SK-N-SH (cell line): ENCODE measurements at regions of chr16 and their contacts with region 1.

Region 1: DNA sequence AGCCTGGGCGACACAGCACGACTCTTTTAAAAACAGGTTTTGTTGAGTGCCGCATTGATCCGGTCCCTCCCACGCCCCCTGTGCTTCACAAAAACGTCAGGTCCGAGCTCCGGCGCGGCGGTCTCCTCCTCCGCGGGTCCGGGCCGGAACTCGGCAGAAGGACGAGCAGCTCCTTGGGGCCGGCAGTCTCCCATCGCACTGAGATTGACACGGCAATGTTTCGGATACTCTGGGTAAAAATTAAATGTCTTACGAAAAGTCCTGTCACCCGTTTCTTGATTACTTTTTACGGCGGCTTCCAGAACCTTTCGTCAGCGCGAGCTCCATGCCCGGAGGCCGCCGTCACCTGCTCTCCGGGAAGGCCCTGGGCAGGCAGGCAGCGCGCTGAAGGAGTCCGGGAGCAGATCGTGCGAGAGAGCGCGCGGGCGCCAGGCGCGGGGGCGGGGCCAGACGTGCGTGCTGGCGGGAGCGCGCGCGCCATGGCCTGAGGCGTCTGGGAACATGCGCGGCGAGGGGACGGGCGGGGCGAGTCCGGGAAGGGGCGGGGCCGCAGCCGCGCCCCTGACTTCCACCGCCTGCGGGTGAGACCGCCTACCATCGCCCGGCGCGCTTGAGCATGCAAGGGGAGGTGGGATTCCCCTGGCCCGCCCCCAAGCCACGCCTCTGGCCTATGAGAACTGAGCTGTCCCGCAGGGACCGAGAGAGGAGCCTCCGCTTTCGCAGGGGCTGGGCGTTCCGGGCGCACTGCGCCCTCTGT is 11.7 kb upstream of the SRL start:
- DNase-seq: peak; percentile 99
- H3K4me3 ChIP-seq: peak overlapping the region; percentile 50 to 81
- H3K27ac ChIP-seq: peak overlapping the region; percentile 73 to 79
- H3K4me1 ChIP-seq: no peaks in the 10 kb centered on the region
- H3K27me3 ChIP-seq: no peaks in the 10 kb centered on the region
- CTCF ChIP-seq: no peak
- EP300 ChIP-seq: peak in 1 of 2 experiments; percentile 52; a peak in 2 of 4 replicates
- RAD21 ChIP-seq: peak; percentile 90

Region 2: GRCh38 chr16:3938848-3939624 is 314.5 kb before region 1 on chr16:
- CTCF ChIA-PET with region 1: interaction called, 16 read pairs
- POLR2A ChIA-PET with region 1: no interaction called
- DNase-seq: peak; percentile 95
- H3K4me3 ChIP-seq: peak overlapping the region; percentile 45 to 64
- H3K27ac ChIP-seq: no peak overlapping the region
- H3K4me1 ChIP-seq: peaks cover 0 to 2% of the 10 kb centered on the region in 2 experiments; a peak in 1 of 4 replicates
- H3K27me3 ChIP-seq: no peaks in the 10 kb centered on the region
- CTCF ChIP-seq: peak; percentile 91
- EP300 ChIP-seq: no peak
- RAD21 ChIP-seq: peak; percentile 59

Region 3: GRCh38 chr16:3988824-3989223 is 264.7 kb before region 1 on chr16:
- CTCF ChIA-PET with region 1: interaction called, 80 read pairs
- POLR2A ChIA-PET with region 1: no interaction called
- DNase-seq: no peak
- H3K4me3 ChIP-seq: no peak overlapping the region
- H3K27ac ChIP-seq: no peak overlapping the region
- H3K4me1 ChIP-seq: no peaks in the 10 kb centered on the region
- H3K27me3 ChIP-seq: no peaks in the 10 kb centered on the region
- CTCF ChIP-seq: no peak
- EP300 ChIP-seq: no peak
- RAD21 ChIP-seq: no peak

Region 4: DNA sequence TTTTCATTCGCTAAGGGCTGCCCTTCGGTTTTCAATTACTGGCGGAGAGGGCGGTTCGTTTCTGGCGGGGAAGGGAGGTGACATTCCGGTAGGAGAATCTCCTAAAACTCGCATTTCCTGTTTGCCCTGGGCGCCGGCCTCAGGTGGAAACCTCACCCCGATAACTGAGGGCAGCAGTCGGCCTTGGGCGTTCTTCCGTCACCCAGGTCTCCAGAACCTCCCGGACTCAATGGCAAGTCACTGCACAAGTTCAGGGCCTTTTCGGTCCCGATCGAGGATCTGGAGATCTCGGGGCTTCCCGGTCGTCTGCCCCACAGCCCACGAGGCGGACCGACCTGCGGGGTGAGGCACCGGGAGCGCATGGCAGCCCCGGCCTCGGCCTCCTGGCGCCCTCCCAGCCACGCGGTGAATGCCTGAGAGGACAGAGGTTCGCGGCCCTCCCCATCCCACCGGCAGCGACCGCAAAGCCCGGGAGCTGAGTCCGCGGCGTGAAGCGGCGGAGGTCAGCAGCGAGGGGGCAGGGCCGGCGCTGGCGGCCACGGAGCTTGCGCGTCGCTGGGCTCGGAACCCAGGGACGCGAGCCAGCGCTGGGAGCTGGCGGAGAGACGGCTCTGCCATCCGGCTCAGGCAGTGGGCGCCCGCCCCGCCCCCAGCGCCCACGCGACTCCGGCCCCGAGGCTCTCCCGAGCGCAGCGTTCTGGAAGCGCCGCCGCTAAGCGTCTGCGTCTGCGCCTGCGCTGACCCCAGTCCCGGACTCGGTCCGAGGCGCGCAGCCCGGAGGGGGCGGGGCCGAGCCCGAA is 70.1 kb before region 1 on chr16:
- CTCF ChIA-PET with region 1: interaction called, 13 read pairs
- POLR2A ChIA-PET with region 1: interaction called, 7 read pairs
- DNase-seq: peak; percentile 100
- H3K4me3 ChIP-seq: peak overlapping the region; percentile 65 to 74
- H3K27ac ChIP-seq: peak overlapping the region; percentile 62 to 88
- H3K4me1 ChIP-seq: peaks cover 0 to 9% of the 10 kb centered on the region in 2 experiments; a peak in 1 of 4 replicates
- H3K27me3 ChIP-seq: no peaks in the 10 kb centered on the region
- CTCF ChIP-seq: no peak
- EP300 ChIP-seq: no peak
- RAD21 ChIP-seq: no peak

Region 5: DNA sequence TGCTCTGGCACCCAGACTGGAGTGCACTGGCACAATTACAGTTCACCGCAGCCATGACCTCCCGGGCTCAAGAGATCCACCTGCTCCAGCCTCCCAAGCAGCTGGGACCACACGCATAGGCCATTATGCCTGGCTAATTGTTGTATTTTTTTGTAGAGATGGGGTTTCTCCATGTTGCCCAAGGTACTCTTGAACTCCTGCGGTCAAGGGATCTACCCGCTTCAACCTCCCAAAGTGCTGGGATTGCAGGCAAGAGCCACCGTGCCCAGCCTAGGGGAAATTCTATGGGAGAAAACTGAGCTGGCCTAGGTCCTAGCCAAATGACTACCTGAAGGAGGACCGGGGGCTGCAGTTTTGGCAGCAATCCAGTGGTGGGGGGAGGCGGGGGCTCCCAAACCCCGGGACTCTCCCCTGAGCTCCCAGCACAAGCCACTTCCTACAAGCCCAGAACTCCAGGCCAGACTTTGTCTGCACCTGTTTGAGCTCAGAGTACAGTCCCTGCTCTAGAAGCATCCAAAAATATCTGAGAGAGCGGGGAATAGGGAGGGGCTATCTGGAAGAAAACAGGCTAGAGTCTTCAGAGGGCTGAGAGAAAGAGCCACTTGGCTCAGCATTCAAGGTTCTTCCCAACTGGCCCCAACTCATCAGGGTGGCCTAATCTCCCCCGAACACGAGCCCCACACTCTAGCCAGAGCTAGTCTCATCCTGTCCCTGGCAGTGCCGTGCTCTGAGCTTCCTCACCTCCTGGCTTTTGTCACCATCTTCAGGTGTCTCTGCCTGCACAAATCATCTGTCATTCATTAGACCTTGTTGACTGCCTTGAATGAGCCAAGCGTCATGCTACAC is 20.8 kb before region 1 on chr16:
- CTCF ChIA-PET with region 1: interaction called, 25 read pairs
- POLR2A ChIA-PET with region 1: no interaction called
- DNase-seq: no peak
- H3K4me3 ChIP-seq: no peak overlapping the region
- H3K27ac ChIP-seq: no peak overlapping the region
- H3K4me1 ChIP-seq: no peaks in the 10 kb centered on the region
- H3K27me3 ChIP-seq: no peaks in the 10 kb centered on the region
- CTCF ChIP-seq: no peak
- EP300 ChIP-seq: no peak
- RAD21 ChIP-seq: no peak

Region 6: DNA sequence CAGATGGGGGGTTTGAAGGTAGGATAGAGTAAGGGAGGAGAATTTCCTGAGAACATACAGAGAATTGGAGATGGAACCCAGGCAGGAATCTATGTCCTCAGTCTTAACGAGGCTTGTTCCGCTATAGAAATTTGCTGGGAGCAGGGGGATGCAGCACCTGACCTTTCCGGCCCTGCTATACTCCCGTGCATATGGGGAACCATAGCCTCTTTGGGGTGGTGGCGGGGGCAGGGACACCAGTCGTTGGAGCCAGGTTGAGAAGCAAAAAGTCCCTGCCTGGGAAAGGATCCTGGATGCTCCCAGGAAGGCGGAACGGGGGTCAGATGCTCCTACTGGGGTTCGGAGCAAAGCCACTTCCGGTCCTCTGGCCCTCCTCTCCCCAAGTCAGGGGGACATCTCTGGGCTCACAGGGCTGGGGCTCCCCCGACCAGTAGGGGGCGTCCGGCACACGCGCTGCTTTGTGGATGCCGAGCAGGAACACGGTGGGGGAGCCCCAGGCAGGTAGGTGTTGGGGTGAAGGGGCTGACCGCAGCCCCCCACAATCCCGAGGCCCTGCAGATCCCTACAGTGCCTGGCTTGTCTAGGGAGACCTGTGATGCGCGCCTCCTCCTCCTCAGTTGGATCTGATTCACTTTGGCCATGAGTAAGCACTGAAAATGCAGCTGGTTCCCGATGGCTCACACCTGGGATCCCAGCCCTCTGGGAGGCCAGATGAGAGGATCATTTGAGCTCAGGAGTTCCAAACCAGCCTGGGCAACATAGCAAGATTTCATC is 34.8 kb after region 1 on chr16:
- CTCF ChIA-PET with region 1: interaction called, 14 read pairs
- POLR2A ChIA-PET with region 1: interaction called, 5 read pairs
- DNase-seq: peak; percentile 91
- H3K4me3 ChIP-seq: no peak overlapping the region
- H3K27ac ChIP-seq: no peak overlapping the region
- H3K4me1 ChIP-seq: peaks cover 0 to 10% of the 10 kb centered on the region in 2 experiments; a peak in 1 of 4 replicates
- H3K27me3 ChIP-seq: no peaks in the 10 kb centered on the region
- CTCF ChIP-seq: peak; percentile 95
- EP300 ChIP-seq: no peak
- RAD21 ChIP-seq: peak; percentile 83

Region 7: GRCh38 chr16:4330277-4330874 is 76.8 kb after region 1 on chr16:
- CTCF ChIA-PET with region 1: interaction called, 112 read pairs
- POLR2A ChIA-PET with region 1: interaction called, 3 read pairs
- DNase-seq: peak; percentile 94
- H3K4me3 ChIP-seq: no peak overlapping the region
- H3K27ac ChIP-seq: no peak overlapping the region
- H3K4me1 ChIP-seq: peaks cover 15 to 21% of the 10 kb centered on the region in 2 experiments; a peak in 3 of 4 replicates
- H3K27me3 ChIP-seq: no peaks in the 10 kb centered on the region
- CTCF ChIP-seq: peak; percentile 96
- EP300 ChIP-seq: no peak
- RAD21 ChIP-seq: peak; percentile 93

Region 8: GRCh38 chr16:4475880-4476788 is 222.6 kb after region 1 on chr16 and contains the start of gene HMOX2:
- CTCF ChIA-PET with region 1: no interaction called
- POLR2A ChIA-PET with region 1: no interaction called
- DNase-seq: peak; percentile 94
- H3K4me3 ChIP-seq: peak within 1 kb of the TSS; percentile 68 to 90
- H3K27ac ChIP-seq: peak within 1 kb of the TSS; percentile 37 to 53; a peak in 2 of 4 replicates
- H3K4me1 ChIP-seq: peaks cover 7 to 15% of the 10 kb centered on the region in 2 experiments; a peak in 2 of 4 replicates
- H3K27me3 ChIP-seq: no peaks in the 10 kb centered on the region
- CTCF ChIP-seq: peak; percentile 53
- EP300 ChIP-seq: no peak
- RAD21 ChIP-seq: no peak
- polyA plus RNA-seq, gene HMOX2: 65.1 and 75.5 TPM in 2 replicates